Heart left ventricle (tissue), 16 donors: ENCODE measurements at regions of chr22 and their contacts with region 1.

Region 1: GRCh38 chr22:29306175-29306834 is at the start of gene GAS2L1:
- DNase-seq: peak; percentile 90 to 93 (median 91)
- ATAC-seq: peak; percentile 66 to 80 (median 68)
- H3K4me3 ChIP-seq: peak within 1 kb of the TSS; percentile 63 to 98 (median 85)
- H3K27ac ChIP-seq: peak within 1 kb of the TSS; percentile 86 to 95 (median 89)
- H3K4me1 ChIP-seq: peaks cover 7 to 64% (median 48%) of the 10 kb centered on the region in 12 donors
- H3K27me3 ChIP-seq: no peaks in the 10 kb centered on the region
- CTCF ChIP-seq: peak; percentile 65 to 89 (median 78)
- POLR2A ChIP-seq: no peak
- total RNA-seq, gene GAS2L1: 12.0 to 46.6 (median 16.8) TPM

Region 2: GRCh38 chr22:29267858-29268417 is 38.4 kb before region 1 on chr22 and contains the starts of genes EWSR1 and RHBDD3:
- intact Hi-C with region 1: loop called in 4 of 10 experiments (anchors 1 to 5 kb)
- DNase-seq: peak; percentile 95 to 98 (median 98)
- ATAC-seq: peak; percentile 91 to 97 (median 92)
- H3K4me3 ChIP-seq: peak within 1 kb of the TSS; percentile 78 to 99 (median 92)
- H3K27ac ChIP-seq: peak within 1 kb of the TSS; percentile 97 to 100 (median 99)
- H3K4me1 ChIP-seq: peaks cover 0 to 61% (median 49%) of the 10 kb centered on the region in 12 donors
- H3K27me3 ChIP-seq: no peaks in the 10 kb centered on the region
- CTCF ChIP-seq: no peak
- POLR2A ChIP-seq: peak in 1 of 2 donors; percentile 49
- total RNA-seq, gene EWSR1: 103 to 202 (median 138) TPM
- total RNA-seq, gene RHBDD3: 10.9 to 29.5 (median 12.6) TPM

Region 3: DNA sequence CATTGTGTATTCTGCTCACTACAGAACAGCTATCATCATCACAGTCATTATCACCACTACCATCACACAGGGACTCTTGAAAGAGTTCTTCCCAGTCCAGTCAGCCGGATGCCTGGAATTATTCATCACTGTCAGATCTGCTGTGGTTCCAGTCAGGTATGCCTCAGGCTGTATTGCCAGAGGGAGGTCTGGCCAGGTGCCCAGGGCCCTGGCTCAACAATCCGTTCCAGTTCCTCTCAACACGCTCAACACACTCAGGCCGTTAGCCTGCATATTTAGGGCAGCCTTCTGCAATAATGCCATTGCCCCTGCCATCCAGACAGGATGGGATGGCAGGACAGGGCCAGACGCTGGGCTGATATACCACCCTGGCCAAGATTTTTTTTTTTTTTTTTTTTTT is 37.8 kb after region 1 on chr22:
- intact Hi-C with region 1: loop called in 2 of 10 experiments (anchors 5 kb)
- DNase-seq: peak; percentile 54 to 82 (median 77)
- ATAC-seq: peak; percentile 77 to 90 (median 84)
- H3K4me3 ChIP-seq: no peak overlapping the region
- H3K27ac ChIP-seq: peak overlapping the region in 9 of 12 donors; percentile 6 to 63 (median 43)
- H3K4me1 ChIP-seq: peaks cover 0 to 45% (median 19%) of the 10 kb centered on the region in 12 donors
- H3K27me3 ChIP-seq: no peaks in the 10 kb centered on the region
- CTCF ChIP-seq: no peak
- POLR2A ChIP-seq: no peak

Region 4: GRCh38 chr22:29351042-29351441 is 44.7 kb after region 1 on chr22:
- intact Hi-C with region 1: loop called in 5 of 10 experiments (anchors 5 kb)
- DNase-seq: peak in 1 of 5 donors; percentile 12
- ATAC-seq: no peak
- H3K4me3 ChIP-seq: no peak overlapping the region
- H3K27ac ChIP-seq: no peak overlapping the region
- H3K4me1 ChIP-seq: peaks cover 0 to 13% (median 2%) of the 10 kb centered on the region in 12 donors
- H3K27me3 ChIP-seq: no peaks in the 10 kb centered on the region
- CTCF ChIP-seq: no peak
- POLR2A ChIP-seq: no peak

Region 5: GRCh38 chr22:29359469-29359868 is 53.2 kb after region 1 on chr22:
- intact Hi-C with region 1: loop called in 9 of 10 experiments (anchors 1 to 5 kb)
- DNase-seq: peak; percentile 53 to 75 (median 69)
- ATAC-seq: peak; percentile 77 to 88 (median 86)
- H3K4me3 ChIP-seq: no peak overlapping the region
- H3K27ac ChIP-seq: no peak overlapping the region
- H3K4me1 ChIP-seq: peaks cover 0 to 23% (median 7%) of the 10 kb centered on the region in 12 donors
- H3K27me3 ChIP-seq: no peaks in the 10 kb centered on the region
- CTCF ChIP-seq: peak; percentile 46 to 78 (median 66)
- POLR2A ChIP-seq: no peak

Region 6: GRCh38 chr22:29375398-29376076 is 69.2 kb after region 1 on chr22:
- intact Hi-C with region 1: no loop called
- DNase-seq: no peak
- ATAC-seq: peak in 2 of 4 donors; percentile 32 to 35
- H3K4me3 ChIP-seq: no peak overlapping the region
- H3K27ac ChIP-seq: no peak overlapping the region
- H3K4me1 ChIP-seq: peaks cover 0 to 26% (median 0%) of the 10 kb centered on the region in 12 donors
- H3K27me3 ChIP-seq: no peaks in the 10 kb centered on the region
- CTCF ChIP-seq: no peak
- POLR2A ChIP-seq: no peak

Region 7: DNA sequence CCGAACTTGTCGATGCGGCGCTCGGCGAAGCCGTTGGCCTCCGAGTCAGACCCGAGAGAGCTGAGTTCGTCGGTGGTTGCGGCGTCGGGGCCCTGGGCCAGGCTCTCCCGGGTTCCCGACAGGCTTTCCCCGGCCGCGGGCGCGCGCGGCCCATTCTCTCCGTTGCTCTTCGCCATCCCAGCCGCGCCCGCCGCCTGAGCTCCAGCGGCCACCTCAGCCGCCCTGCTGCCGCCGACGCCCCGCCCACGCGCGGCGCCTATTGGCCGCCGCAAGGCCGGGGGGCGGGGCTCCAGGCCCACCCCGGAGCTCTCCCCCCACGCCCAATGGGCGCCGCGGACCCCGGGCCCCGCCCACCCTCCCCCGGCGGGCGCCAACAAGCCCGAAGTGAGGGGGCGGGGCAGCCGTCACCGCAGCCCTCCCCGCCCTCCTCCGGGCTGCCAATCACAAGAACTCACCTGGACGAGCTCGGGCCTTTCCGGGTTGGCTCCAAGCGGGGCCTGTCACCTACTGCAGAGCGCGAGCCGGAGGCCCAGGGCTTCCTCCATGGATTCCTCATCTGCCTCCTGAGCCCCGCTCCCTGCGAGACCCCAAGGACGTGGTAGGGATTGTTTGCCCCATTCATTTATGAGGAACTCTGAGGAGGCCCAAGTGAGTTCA is 1020.5 kb after region 1 on chr22 and contains the start of gene TBC1D10A:
- intact Hi-C with region 1: loop called in 1 of 10 experiments (anchors 5 kb)
- DNase-seq: peak; percentile 91 to 95 (median 92)
- ATAC-seq: peak; percentile 87 to 97 (median 93)
- H3K4me3 ChIP-seq: peak within 1 kb of the TSS; percentile 64 to 100 (median 94)
- H3K27ac ChIP-seq: peak within 1 kb of the TSS; percentile 48 to 95 (median 88)
- H3K4me1 ChIP-seq: peaks cover under 1 to 51% (median 37%) of the 10 kb centered on the region in 12 donors
- H3K27me3 ChIP-seq: no peaks in the 10 kb centered on the region
- CTCF ChIP-seq: no peak
- POLR2A ChIP-seq: peak in 1 of 2 donors; percentile 96
- total RNA-seq, gene TBC1D10A: 4.3 to 10.1 (median 7.1) TPM